ENCODE measurements at regions of chr15 and their contacts with region 1.

Region 1: DNA sequence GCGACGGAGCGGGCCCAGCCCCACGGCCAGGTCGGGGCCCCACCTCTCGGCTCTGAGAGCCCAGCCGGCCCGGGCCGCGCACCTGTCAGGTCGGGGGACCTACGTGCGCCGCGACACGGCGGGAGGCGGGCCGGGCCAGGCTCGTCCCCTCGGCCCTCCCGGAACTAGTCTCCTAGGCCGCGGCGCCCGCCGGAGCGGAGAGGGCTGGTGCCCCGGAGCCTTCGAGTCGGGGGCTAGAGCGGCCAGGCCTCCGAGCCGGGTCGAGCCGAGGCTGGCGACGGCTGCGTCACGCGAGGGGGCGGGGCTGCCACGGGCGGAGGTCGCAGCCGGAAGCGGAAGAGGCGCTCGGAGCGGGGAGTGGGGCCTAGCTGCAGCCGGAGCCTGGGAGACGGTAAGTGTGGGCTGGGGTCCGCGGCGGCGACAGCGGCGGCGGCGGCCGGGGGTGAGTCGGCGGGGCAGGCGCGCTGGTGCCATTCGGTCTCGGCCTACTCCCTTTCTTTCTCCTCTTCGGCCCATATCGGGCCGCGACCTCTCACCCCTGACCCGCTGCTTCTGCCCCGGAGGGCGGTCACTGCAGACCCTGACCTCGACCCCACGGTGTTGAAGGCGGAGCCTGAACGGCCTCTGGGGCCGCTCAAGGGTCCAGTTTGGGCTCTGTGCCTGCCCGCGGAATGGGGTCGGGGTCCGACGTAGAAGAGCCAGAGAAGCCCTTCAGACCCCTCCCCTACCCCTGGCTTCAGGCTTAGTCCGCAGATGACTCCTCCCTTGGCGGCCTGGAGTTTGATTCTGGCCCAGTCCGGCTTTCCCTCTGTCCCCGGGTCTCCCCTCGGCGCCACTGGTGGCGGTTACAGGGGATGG is at the start of gene CLK3:
- DNase-seq: peak; percentile 89 to 99 (median 96)
- ATAC-seq: peak; percentile 67
- H3K4me3 ChIP-seq: peak within 1 kb of the TSS; percentile 88 to 95
- H3K4me3 Mint-ChIP-seq: peak within 1 kb of the TSS; percentile 91
- H3K27ac ChIP-seq: peak within 1 kb of the TSS; percentile 97 to 99
- H3K27ac Mint-ChIP-seq: peak within 1 kb of the TSS; percentile 97
- H3K4me1 ChIP-seq: peaks cover 25% of the 10 kb centered on the region
- H3K4me1 Mint-ChIP-seq: peaks cover 38% of the 10 kb centered on the region
- H3K27me3 ChIP-seq: no peaks in the 10 kb centered on the region
- H3K27me3 Mint-ChIP-seq: no peaks in the 10 kb centered on the region
- CTCF ChIP-seq: no peak
- total RNA-seq, gene CLK3: 246 to 262 TPM

Region 2: GRCh38 chr15:73991726-73992593 is 623.8 kb before region 1 on chr15 and contains the start of gene STOML1:
- CTCF ChIA-PET with region 1: no interaction called
- POLR2A ChIA-PET with region 1: no interaction called
- intact Hi-C with region 1: loop called (anchors 2 to 10 kb)
- DNase-seq: peak; percentile 88 to 97 (median 96)
- ATAC-seq: peak; percentile 79
- H3K4me3 ChIP-seq: peak within 1 kb of the TSS; percentile 62 to 88
- H3K4me3 Mint-ChIP-seq: peak within 1 kb of the TSS; percentile 100
- H3K27ac ChIP-seq: peak within 1 kb of the TSS; percentile 53
- H3K27ac Mint-ChIP-seq: peak within 1 kb of the TSS; percentile 73
- H3K4me1 ChIP-seq: peaks cover 42% of the 10 kb centered on the region
- H3K4me1 Mint-ChIP-seq: peaks cover 48% of the 10 kb centered on the region
- H3K27me3 ChIP-seq: no peaks in the 10 kb centered on the region
- H3K27me3 Mint-ChIP-seq: no peaks in the 10 kb centered on the region
- CTCF ChIP-seq: peak; percentile 95
- total RNA-seq, gene STOML1: 2.5 to 4.8 TPM

Region 3: GRCh38 chr15:74540761-74541493 is 74.8 kb before region 1 on chr15 and contains the start of gene ARID3B:
- CTCF ChIA-PET with region 1: interaction called, 6 read pairs
- POLR2A ChIA-PET with region 1: interaction called, 32 read pairs
- intact Hi-C with region 1: loop called (anchors 1 kb)
- DNase-seq: peak; percentile 89 to 98 (median 95)
- ATAC-seq: peak; percentile 82
- H3K4me3 ChIP-seq: peak within 1 kb of the TSS; percentile 88
- H3K4me3 Mint-ChIP-seq: peak within 1 kb of the TSS; percentile 99
- H3K27ac ChIP-seq: peak within 1 kb of the TSS; percentile 66 to 81
- H3K27ac Mint-ChIP-seq: peak within 1 kb of the TSS; percentile 98
- H3K4me1 ChIP-seq: peaks cover 39% of the 10 kb centered on the region
- H3K4me1 Mint-ChIP-seq: peaks cover 55% of the 10 kb centered on the region
- H3K27me3 ChIP-seq: no peaks in the 10 kb centered on the region
- H3K27me3 Mint-ChIP-seq: no peaks in the 10 kb centered on the region
- CTCF ChIP-seq: no peak
- total RNA-seq, gene ARID3B: 35.2 to 38.7 TPM

Region 4: GRCh38 chr15:74626752-74627692 is 11.3 kb after region 1 on chr15:
- CTCF ChIA-PET with region 1: interaction called, 295 read pairs
- POLR2A ChIA-PET with region 1: interaction called, 16 read pairs
- intact Hi-C with region 1: no loop called
- DNase-seq: peak in 1 of 9 experiments; percentile 54
- ATAC-seq: peak; percentile 69
- H3K4me3 ChIP-seq: no peak overlapping the region
- H3K4me3 Mint-ChIP-seq: peak overlapping the region; percentile 64
- H3K27ac ChIP-seq: peak overlapping the region; percentile 39 to 48
- H3K27ac Mint-ChIP-seq: peak overlapping the region; percentile 74
- H3K4me1 ChIP-seq: peaks cover 48% of the 10 kb centered on the region
- H3K4me1 Mint-ChIP-seq: peaks cover 40% of the 10 kb centered on the region
- H3K27me3 ChIP-seq: no peaks in the 10 kb centered on the region
- H3K27me3 Mint-ChIP-seq: no peaks in the 10 kb centered on the region
- CTCF ChIP-seq: no peak

Region 5: GRCh38 chr15:74781431-74782258 is 165.9 kb after region 1 on chr15 and contains the start of gene CSK:
- CTCF ChIA-PET with region 1: interaction called, 730 read pairs
- POLR2A ChIA-PET with region 1: interaction called, 16 read pairs
- intact Hi-C with region 1: loop called in 1 of 2 experiments (anchors 5 kb)
- DNase-seq: peak; percentile 56 to 92 (median 79)
- ATAC-seq: peak; percentile 63
- H3K4me3 ChIP-seq: peak within 1 kb of the TSS; percentile 93 to 98
- H3K4me3 Mint-ChIP-seq: peak within 1 kb of the TSS; percentile 85
- H3K27ac ChIP-seq: peak within 1 kb of the TSS; percentile 74 to 90
- H3K27ac Mint-ChIP-seq: peak within 1 kb of the TSS; percentile 93
- H3K4me1 ChIP-seq: peaks cover 70% of the 10 kb centered on the region
- H3K4me1 Mint-ChIP-seq: peaks cover 66% of the 10 kb centered on the region
- H3K27me3 ChIP-seq: no peaks in the 10 kb centered on the region
- H3K27me3 Mint-ChIP-seq: no peaks in the 10 kb centered on the region
- CTCF ChIP-seq: peak; percentile 56
- total RNA-seq, gene CSK: 99.5 to 118 TPM

Region 6: DNA sequence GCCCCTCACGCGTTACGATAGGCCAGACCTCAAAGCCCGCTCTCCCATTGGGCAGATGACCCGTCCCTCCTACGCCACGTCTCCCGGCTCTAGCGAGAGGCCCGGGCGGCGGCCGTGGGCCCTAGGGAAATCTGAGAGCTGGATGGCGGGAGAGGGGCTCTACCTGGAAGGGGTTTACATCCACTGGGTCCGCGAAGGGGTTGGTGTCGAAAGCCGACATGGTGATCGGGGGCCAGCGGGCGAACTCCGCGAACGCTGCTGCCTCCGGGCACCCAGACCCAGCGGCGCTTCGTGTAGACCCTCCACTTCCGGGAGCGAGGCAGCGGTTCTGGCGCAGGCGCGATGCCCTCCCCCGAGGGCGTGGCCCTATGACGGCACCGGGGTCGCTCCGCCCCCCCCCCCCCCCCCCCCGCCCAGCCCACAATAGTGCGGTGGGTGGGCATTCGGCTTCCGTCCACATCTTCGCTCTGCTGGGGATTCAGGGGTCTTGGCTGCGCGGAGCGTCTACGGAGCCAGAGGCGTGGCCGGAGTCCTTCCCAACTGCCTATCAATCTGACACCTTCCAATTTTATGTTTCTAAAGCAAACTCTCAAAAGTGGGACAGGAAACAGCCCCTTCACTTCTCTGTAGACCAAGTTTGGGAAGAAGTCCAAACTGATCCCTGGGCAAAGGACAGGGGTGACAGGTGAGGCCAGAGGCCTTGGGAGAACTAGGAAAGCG is 257.5 kb after region 1 on chr15 and contains the start of gene SCAMP2:
- CTCF ChIA-PET with region 1: no interaction called
- POLR2A ChIA-PET with region 1: no interaction called
- intact Hi-C with region 1: loop called (anchors 1 kb)
- DNase-seq: peak; percentile 82 to 96 (median 90)
- ATAC-seq: peak; percentile 93
- H3K4me3 ChIP-seq: peak within 1 kb of the TSS; percentile 84 to 96
- H3K4me3 Mint-ChIP-seq: peak within 1 kb of the TSS; percentile 98
- H3K27ac ChIP-seq: peak within 1 kb of the TSS; percentile 87 to 95
- H3K27ac Mint-ChIP-seq: peak within 1 kb of the TSS; percentile 95
- H3K4me1 ChIP-seq: peaks cover 43% of the 10 kb centered on the region
- H3K4me1 Mint-ChIP-seq: peaks cover 45% of the 10 kb centered on the region
- H3K27me3 ChIP-seq: no peaks in the 10 kb centered on the region
- H3K27me3 Mint-ChIP-seq: no peaks in the 10 kb centered on the region
- CTCF ChIP-seq: no peak
- total RNA-seq, gene SCAMP2: 48.7 to 57.2 TPM

Region 7: DNA sequence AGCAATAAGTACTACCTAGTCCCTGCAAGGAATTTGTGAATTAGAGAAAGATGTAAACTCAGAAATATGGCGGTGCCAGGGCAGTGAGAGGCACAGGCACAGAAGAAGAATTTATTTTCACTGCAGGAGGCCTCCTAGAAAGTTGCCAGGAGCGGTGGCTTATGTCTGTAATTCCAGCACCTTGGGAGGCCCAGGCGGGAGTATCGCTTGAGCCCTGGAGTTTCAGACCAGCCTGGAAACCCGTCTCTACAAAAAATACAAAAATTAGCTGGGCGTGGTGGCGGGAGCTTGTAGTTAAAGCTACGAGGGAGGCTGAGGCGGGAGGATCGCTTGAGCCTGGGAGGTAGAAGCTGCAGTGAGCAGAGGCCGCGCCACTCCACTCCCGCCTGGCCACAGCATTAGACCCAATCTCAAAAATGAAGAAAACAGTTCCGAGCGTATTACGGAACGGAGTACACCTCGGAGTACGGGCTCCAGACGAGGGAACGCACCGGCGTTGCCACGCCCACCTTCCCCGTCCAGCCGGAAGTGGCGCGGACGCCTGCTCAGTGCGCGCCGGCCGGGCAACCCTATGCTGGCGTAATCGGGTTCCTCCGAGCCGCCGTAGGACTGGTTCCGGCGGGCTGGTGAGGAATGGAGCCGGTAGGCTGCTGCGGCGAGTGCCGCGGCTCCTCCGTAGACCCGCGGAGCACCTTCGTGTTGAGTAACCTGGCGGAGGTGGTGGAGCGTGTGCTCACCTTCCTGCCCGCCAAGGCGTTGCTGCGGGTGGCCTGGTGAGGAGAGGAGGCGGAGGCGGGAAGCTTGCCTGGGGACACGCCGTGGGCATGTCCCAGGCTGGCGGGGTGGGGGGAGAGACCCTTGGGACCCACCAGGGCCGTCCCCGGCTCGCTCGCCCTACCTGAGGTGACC is 1287.8 kb after region 1 on chr15 and contains the start of gene FBXO22:
- CTCF ChIA-PET with region 1: no interaction called
- POLR2A ChIA-PET with region 1: no interaction called
- intact Hi-C with region 1: loop called in 1 of 2 experiments (anchors 10 kb)
- DNase-seq: peak; percentile 78 to 93 (median 88)
- ATAC-seq: peak; percentile 90
- H3K4me3 ChIP-seq: peak within 1 kb of the TSS; percentile 83 to 84
- H3K4me3 Mint-ChIP-seq: peak within 1 kb of the TSS; percentile 98
- H3K27ac ChIP-seq: peak within 1 kb of the TSS; percentile 63 to 68
- H3K27ac Mint-ChIP-seq: peak within 1 kb of the TSS; percentile 95
- H3K4me1 ChIP-seq: peaks cover 19% of the 10 kb centered on the region
- H3K4me1 Mint-ChIP-seq: peaks cover 49% of the 10 kb centered on the region
- H3K27me3 ChIP-seq: no peaks in the 10 kb centered on the region
- H3K27me3 Mint-ChIP-seq: no peaks in the 10 kb centered on the region
- CTCF ChIP-seq: no peak
- total RNA-seq, gene FBXO22: 6.1 to 6.4 TPM

Measured in CD8-positive, alpha-beta T cell (primary cell).